ENCODE measurements at regions of chr21 and their contacts with region 1.

Region 1: DNA sequence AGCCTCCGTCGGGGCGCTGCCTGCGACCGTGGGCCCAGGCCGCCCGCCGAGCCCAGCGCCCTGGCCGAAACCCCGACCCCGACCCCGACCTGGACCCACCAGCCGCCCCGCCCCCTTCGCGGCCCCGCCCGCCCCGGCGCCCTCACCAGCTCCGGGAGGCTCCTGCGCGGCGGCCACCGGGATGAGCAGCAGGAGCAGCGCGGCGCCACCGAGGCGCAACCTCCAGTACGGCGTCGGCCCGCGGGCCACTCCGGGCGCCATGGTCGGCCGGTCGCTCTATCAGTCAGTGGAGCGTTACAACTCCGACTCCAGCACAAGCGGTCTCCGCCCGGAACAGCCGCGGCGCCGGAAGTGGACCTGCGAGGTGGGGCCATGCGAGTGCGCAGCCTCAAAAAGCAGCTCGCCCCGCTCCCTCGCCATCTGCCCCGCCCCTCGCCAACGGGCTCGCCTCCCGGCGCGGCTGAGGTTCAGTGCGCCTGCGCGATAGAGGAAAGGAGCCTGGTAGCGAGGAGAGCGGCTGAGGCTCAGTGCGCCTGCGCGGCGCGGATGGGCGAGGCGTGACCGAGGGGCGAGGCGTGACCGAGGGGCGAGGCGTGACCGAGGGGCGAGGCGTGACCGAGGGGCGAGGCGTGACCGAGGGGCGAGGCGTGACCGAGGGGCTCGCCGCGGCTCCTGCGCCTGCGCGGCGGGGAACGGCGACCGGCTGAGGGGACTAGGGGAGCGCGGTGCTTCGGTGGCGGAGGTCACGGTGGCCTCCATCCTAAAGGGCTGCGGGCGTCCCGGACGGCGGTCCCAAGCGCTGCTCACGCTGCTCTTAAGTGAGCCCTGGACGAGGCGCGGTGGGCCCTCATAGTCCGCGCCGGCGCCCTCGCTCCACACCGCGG is at the start of gene PTTG1IP:
- DNase-seq: peak; percentile 99
- H3K4me3 ChIP-seq: peak within 1 kb of the TSS; percentile 83 to 96 (median 91)
- H3K27ac ChIP-seq: peak within 1 kb of the TSS; percentile 97
- H3K4me1 ChIP-seq: peaks cover 59% of the 10 kb centered on the region
- H3K27me3 ChIP-seq: no peaks in the 10 kb centered on the region
- CTCF ChIP-seq: no peak
- POLR2A ChIP-seq: peak; percentile 58
- total RNA-seq, gene PTTG1IP: 406 and 415 TPM in 2 replicates

Region 2: GRCh38 chr21:44801468-44802395 is 71.9 kb before region 1 on chr21 and contains the start of gene UBE2G2:
- CTCF ChIA-PET with region 1: interaction called, 4 read pairs
- POLR2A ChIA-PET with region 1: no interaction called
- dilution Hi-C with region 1: no loop called
- intact Hi-C with region 1: loop called (anchors 2 kb)
- DNase-seq: peak; percentile 80
- H3K4me3 ChIP-seq: peak within 1 kb of the TSS; percentile 57 to 97 (median 94)
- H3K27ac ChIP-seq: peak within 1 kb of the TSS; percentile 54
- H3K4me1 ChIP-seq: peaks cover 20% of the 10 kb centered on the region
- H3K27me3 ChIP-seq: no peaks in the 10 kb centered on the region
- CTCF ChIP-seq: no peak
- POLR2A ChIP-seq: peak; percentile 74
- total RNA-seq, gene UBE2G2: 114 and 117 TPM in 2 replicates

Region 3: DNA sequence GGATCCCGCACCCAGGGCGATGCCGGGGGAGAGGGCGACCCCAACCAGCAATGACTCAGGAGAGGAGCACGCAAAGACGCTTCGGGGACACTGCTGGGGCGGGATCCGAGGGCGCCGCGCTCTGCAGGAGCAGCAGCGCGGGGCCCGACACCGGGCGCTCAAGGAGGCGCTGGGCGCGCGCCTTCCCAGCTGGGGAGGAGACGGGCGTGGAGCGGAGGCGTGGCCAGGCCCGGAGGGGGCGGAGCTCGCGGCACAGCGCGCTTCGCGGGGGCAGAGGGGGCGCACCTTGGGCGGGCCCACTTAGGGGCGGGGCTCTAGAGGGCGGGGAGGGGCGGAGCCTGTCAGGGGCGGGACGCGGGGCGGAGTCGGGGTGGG is 56.1 kb before region 1 on chr21:
- CTCF ChIA-PET with region 1: no interaction called
- POLR2A ChIA-PET with region 1: no interaction called
- dilution Hi-C with region 1: no loop called
- intact Hi-C with region 1: loop called (anchors 1 kb)
- DNase-seq: peak; percentile 80
- H3K4me3 ChIP-seq: peak overlapping the region; percentile 67 to 81 (median 71)
- H3K27ac ChIP-seq: peak overlapping the region; percentile 59
- H3K4me1 ChIP-seq: peaks cover 4% of the 10 kb centered on the region
- H3K27me3 ChIP-seq: no peaks in the 10 kb centered on the region
- CTCF ChIP-seq: peak in 1 of 2 donors; percentile 2
- POLR2A ChIP-seq: no peak

Region 4: DNA sequence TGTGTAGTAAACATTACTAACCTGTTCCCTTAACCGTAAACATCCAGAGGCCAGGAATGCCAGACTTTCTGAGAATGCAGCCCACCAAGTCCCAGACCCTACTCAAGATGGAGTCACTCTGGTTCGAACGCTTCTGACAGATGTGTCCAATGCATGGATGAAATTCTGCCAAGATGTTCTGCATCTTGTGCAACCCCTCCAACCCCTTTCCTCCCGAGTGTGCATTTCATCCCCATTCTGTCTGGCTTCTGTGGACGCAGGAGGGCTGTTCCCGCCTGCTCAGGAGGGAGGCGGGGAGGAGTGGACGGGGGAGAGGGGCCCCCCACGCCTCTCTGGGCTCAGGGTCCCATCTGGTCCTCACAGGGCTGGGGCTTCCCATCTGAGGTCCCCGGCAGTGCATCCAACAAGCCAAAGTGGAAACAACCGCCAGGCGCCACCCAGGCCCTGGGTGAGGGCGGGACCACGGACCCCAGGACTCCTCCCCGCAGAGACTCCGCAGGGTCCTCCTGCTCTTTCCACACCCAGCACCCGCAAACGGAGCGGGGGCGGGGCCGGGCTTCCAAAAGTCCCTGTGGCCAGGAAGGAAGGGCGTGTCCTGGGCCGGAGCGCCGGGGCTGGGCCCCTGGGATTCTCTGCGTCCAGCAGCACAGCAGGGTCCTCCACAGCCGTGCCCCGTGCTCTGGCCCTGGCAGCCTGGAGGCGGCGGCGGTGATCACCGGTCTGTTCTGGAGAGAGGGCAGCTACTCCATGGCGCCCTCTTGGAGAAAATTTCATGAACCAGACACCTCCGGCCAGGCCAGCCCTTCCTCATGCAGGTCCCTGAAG is 28.0 kb before region 1 on chr21:
- CTCF ChIA-PET with region 1: interaction called, 7 read pairs
- POLR2A ChIA-PET with region 1: no interaction called
- dilution Hi-C with region 1: no loop called
- intact Hi-C with region 1: loop called (anchors 1 kb)
- DNase-seq: peak; percentile 68
- H3K4me3 ChIP-seq: peak overlapping the region; percentile 7 to 28 (median 11)
- H3K27ac ChIP-seq: no peak overlapping the region
- H3K4me1 ChIP-seq: peaks cover 16% of the 10 kb centered on the region
- H3K27me3 ChIP-seq: peaks cover 2 to 4% of the 10 kb centered on the region in 2 experiments
- CTCF ChIP-seq: peak; percentile 22 to 53
- POLR2A ChIP-seq: no peak

Region 5: DNA sequence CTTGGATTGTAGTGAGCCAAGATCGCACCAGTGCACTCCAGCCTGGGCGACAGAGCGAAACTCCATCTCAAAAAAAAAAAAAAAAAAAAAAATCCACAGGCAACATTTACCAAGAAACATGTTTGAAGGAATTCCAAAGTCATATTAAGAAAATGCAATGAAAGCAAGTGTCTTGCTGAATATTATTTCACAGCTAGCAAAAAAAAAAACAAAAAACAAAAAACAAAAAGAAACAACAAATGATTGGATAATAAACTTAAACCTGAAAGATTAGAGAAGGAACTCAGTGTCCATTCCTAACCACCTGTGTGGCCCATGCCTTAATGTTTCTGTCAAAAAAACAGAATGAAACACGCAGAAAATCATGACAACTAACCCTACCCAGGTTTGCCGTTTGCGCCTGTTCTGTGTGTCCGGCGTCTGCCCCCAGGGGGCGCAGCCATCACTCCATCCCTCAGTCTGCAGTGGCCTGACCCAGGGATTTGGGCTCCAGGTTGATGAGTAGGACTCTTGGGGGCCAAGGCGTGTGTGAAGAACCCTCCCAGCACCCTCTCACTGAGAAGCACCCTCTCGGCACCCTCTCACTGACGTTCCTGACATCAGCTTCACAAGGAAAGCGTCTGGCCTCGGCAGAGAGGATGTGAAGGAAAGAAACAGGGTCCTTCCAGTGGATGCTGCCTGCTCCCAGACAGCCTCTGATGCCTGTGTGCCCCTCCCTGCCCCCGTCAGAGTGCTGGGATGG is 19.1 kb after region 1 on chr21:
- CTCF ChIA-PET with region 1: interaction called, 47 read pairs
- POLR2A ChIA-PET with region 1: no interaction called
- dilution Hi-C with region 1: no loop called
- intact Hi-C with region 1: no loop called
- DNase-seq: peak; percentile 54
- H3K4me3 ChIP-seq: no peak overlapping the region
- H3K27ac ChIP-seq: no peak overlapping the region
- H3K4me1 ChIP-seq: no peaks in the 10 kb centered on the region
- H3K27me3 ChIP-seq: no peaks in the 10 kb centered on the region
- CTCF ChIP-seq: peak; percentile 91 to 92
- POLR2A ChIP-seq: no peak

Region 6: GRCh38 chr21:44927587-44928461 is 54.2 kb after region 1 on chr21:
- CTCF ChIA-PET with region 1: interaction called, 19 read pairs
- POLR2A ChIA-PET with region 1: no interaction called
- dilution Hi-C with region 1: no loop called
- intact Hi-C with region 1: no loop called
- DNase-seq: no peak
- H3K4me3 ChIP-seq: no peak overlapping the region
- H3K27ac ChIP-seq: no peak overlapping the region
- H3K4me1 ChIP-seq: peaks cover 31% of the 10 kb centered on the region
- H3K27me3 ChIP-seq: peaks cover 7 to 16% of the 10 kb centered on the region in 2 experiments
- CTCF ChIP-seq: no peak
- POLR2A ChIP-seq: no peak

Region 7: GRCh38 chr21:45091550-45092322 is 218.1 kb after region 1 on chr21:
- CTCF ChIA-PET with region 1: no interaction called
- POLR2A ChIA-PET with region 1: no interaction called
- dilution Hi-C with region 1: no loop called
- intact Hi-C with region 1: loop called (anchors 1 kb)
- DNase-seq: no peak
- H3K4me3 ChIP-seq: no peak overlapping the region
- H3K27ac ChIP-seq: no peak overlapping the region
- H3K4me1 ChIP-seq: peaks cover 55% of the 10 kb centered on the region
- H3K27me3 ChIP-seq: no peaks in the 10 kb centered on the region
- CTCF ChIP-seq: no peak
- POLR2A ChIP-seq: no peak